ENCODE measurements at regions of chr2 and their contacts with region 1.

Region 1: DNA sequence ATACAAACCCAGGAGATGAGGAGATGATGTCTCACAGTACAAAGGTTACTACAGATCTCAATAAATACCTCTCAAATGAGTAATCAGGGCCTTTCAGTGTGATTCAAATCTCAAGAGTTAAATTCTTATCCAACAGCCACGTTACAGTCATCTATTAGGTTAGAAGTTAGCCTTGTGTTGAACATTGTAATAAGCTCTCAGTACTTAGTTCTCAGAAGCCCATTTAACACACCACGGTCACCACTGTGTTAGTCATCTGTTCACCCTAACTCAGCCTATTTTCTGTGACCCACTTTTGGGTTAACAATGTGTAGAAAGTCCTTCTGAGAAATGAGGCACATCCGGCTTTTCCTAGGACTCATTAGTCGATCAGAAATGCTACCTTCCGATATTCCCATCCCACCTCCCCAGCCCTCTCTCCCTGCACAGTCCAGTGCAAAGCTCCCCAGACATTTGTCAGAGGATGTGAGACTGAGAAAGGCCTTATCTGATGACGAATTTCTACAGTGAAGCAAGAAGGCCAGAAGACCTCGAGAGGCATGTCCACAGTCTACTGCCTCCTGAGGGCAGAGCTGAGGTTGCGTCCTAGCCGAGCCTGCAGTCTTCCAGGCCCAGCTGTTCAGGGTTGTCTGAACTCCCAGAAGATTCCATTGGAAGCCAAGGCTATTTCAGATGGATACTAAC is 92.6 kb downstream of the ACTR2 start:
- DNase-seq: peak; percentile 38 to 96
- H3K4me3 ChIP-seq: peak overlapping the region; percentile 42
- H3K27ac ChIP-seq: peak overlapping the region; percentile 96
- H3K4me1 ChIP-seq: peaks cover 32% of the 10 kb centered on the region
- H3K27me3 ChIP-seq: no peaks in the 10 kb centered on the region
- CTCF ChIP-seq: peak; percentile 65

Region 2: GRCh38 chr2:65396348-65397026 is 76.3 kb after region 1 on chr2:
- CTCF ChIA-PET with region 1: no interaction called
- POLR2A ChIA-PET with region 1: interaction called, 20 read pairs
- intact Hi-C with region 1: no loop called
- DNase-seq: peak in 1 of 2 experiments; percentile 60
- H3K4me3 ChIP-seq: peak overlapping the region; percentile 7; the same call in 1 of the 2 replicates
- H3K27ac ChIP-seq: peak overlapping the region; percentile 59
- H3K4me1 ChIP-seq: peaks cover 46% of the 10 kb centered on the region
- H3K27me3 ChIP-seq: no peaks in the 10 kb centered on the region
- CTCF ChIP-seq: no peak

Region 3: GRCh38 chr2:65630643-65631042 is 310.5 kb after region 1 on chr2:
- CTCF ChIA-PET with region 1: no interaction called
- POLR2A ChIA-PET with region 1: no interaction called
- intact Hi-C with region 1: no loop called
- DNase-seq: no peak
- H3K4me3 ChIP-seq: no peak overlapping the region
- H3K27ac ChIP-seq: no peak overlapping the region
- H3K4me1 ChIP-seq: no peaks in the 10 kb centered on the region
- H3K27me3 ChIP-seq: no peaks in the 10 kb centered on the region
- CTCF ChIP-seq: no peak

Region 4: DNA sequence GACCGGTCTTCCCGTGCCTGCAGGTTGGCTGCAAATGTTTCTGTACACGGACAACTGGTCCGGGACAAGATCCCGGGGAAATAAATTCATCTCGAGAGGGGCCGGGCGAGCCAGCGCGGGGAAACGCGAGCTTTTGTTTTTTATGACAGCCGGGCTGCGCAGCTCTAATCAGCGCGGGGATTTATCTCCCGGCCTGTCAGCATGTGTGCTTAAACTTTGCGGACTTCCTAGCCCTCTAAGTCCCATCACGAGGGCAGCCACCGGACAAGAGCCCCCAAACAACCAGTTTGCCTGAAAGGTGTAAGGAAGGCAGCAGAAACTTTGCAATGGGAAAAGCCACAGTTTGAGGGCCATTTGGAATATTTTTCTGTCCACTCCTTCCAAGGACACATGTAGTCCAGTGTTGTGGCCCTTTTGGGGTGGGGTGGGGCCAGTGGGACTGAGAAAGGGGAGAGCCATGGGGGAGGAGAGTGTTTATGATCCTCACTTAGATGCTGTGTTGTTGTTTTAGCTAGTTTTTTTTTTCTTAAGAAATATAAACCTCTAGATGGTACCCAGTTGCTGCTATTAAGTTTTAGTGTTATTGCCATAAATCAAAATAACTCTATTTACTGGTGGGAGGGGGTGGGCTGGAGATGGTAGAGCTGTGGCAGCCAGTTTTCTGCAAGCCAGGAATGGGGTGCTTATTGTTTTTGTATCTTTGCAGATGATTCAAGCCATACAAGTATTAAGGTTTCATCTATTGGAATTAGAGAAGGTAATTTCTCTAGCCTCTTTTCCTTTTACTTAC is 1120.7 kb after region 1 on chr2:
- CTCF ChIA-PET with region 1: interaction called, 10 read pairs
- POLR2A ChIA-PET with region 1: no interaction called
- intact Hi-C with region 1: no loop called
- DNase-seq: no peak
- H3K4me3 ChIP-seq: no peak overlapping the region
- H3K27ac ChIP-seq: no peak overlapping the region
- H3K4me1 ChIP-seq: peaks cover 13% of the 10 kb centered on the region
- H3K27me3 ChIP-seq: no peaks in the 10 kb centered on the region
- CTCF ChIP-seq: no peak

Measured in PC-9 (cell line).